ENCODE measurements at regions of chr10 and their contacts with region 1.

Region 1: GRCh38 chr10:27742195-27743011 is 3.2 kb downstream of the MKX start:
- DNase-seq: peak in 9 of 10 donors; percentile 48 to 95 (median 71)

Region 2: GRCh38 chr10:28179006-28179742 is 436.8 kb after region 1 on chr10:
- intact Hi-C with region 1: loop called (anchors 2 kb)
- DNase-seq: no peak

Region 3: GRCh38 chr10:28241741-28242399 is 499.5 kb after region 1 on chr10:
- intact Hi-C with region 1: loop called (anchors 5 kb)
- DNase-seq: no peak

Region 4: DNA sequence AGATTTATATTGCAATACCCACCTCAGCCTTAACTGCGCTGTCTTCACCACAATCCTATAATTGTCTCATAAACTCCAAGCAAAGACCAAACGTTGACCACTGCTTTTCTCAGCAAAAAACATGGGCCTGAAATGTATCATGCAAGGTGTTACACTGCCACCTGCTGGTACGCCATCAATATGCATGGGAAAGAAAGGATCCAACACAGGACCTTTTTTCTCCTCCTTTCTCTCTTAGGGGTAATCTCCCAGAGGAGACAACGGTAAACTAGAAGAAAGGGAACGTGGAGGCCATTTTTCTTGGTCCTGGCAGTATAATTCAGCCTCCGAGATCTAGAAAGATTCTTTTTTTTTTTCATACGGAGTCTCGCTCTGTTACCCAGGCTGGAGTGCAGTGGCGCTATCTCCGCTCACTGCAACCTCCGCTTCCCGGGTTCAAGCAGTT is 639.5 kb after region 1 on chr10:
- intact Hi-C with region 1: loop called (anchors 10 kb)
- DNase-seq: peak in 9 of 10 donors; percentile 32 to 87 (median 75)